ENCODE measurements at regions of chr6 and their contacts with region 1.

Region 1: DNA sequence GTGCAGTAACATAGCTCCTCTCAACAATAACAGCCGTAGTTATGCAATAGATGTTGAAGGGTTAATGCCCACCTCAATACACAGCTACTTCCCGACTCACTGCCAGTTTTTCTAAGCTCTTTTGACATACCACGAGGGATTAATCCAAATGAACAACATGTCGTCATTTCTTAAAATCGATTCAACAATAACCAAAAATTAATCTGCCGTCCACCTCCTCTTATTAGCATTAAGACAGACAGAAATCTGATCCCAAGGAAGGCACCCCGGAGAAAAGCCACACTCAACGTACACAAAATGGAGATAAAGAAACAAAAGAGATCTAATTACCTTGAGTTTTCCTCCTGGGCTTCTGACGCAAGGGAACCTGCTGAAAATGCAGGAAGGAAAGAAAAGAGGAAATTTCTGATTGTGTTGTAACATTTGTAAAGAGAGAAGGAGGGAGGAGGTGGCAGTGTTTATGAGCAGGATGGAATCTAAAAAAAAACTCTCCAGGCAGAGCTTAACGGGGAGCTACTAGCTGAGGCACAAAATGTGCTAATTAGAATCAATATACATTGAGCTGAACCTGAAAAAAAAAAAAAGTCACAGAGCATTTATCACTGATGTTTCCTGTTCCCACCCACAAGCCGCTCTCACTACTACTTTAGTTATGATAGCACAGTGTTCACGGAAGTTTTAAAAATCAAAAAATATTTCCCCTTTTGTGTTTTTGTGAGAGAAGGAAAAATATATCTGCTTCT is 109.3 kb downstream of the IPCEF1 start:
- DNase-seq: no peak
- H3K4me3 Mint-ChIP-seq: peak overlapping the region; percentile 84
- H3K27ac Mint-ChIP-seq: peak overlapping the region; percentile 52
- H3K4me1 Mint-ChIP-seq: peaks cover 79% of the 10 kb centered on the region
- H3K27me3 Mint-ChIP-seq: peaks cover 27% of the 10 kb centered on the region

Region 2: GRCh38 chr6:152982768-152983636 is 1264.3 kb before region 1 on chr6 and contains the start of gene FBXO5:
- intact Hi-C with region 1: loop called (anchors 5 kb)
- DNase-seq: peak; percentile 97
- H3K4me3 Mint-ChIP-seq: peak within 1 kb of the TSS; percentile 97
- H3K27ac Mint-ChIP-seq: peak within 1 kb of the TSS; percentile 100
- H3K4me1 Mint-ChIP-seq: peaks cover 44% of the 10 kb centered on the region
- H3K27me3 Mint-ChIP-seq: no peaks in the 10 kb centered on the region
- total RNA-seq, gene FBXO5: 31.4 and 34.6 TPM in 2 replicates

Region 3: GRCh38 chr6:154187714-154188113 is 59.6 kb before region 1 on chr6:
- intact Hi-C with region 1: no loop called
- DNase-seq: no peak
- H3K4me3 Mint-ChIP-seq: no peak overlapping the region
- H3K27ac Mint-ChIP-seq: no peak overlapping the region
- H3K4me1 Mint-ChIP-seq: no peaks in the 10 kb centered on the region
- H3K27me3 Mint-ChIP-seq: no peaks in the 10 kb centered on the region

Region 4: GRCh38 chr6:154267508-154268106 is 20.3 kb after region 1 on chr6:
- intact Hi-C with region 1: loop called (anchors 1 kb)
- DNase-seq: no peak
- H3K4me3 Mint-ChIP-seq: no peak overlapping the region
- H3K27ac Mint-ChIP-seq: no peak overlapping the region
- H3K4me1 Mint-ChIP-seq: peaks cover 9% of the 10 kb centered on the region
- H3K27me3 Mint-ChIP-seq: peaks cover 18% of the 10 kb centered on the region

Region 5: GRCh38 chr6:154352898-154353585 is 105.8 kb after region 1 on chr6:
- intact Hi-C with region 1: loop called (anchors 5 kb)
- DNase-seq: no peak
- H3K4me3 Mint-ChIP-seq: no peak overlapping the region
- H3K27ac Mint-ChIP-seq: no peak overlapping the region
- H3K4me1 Mint-ChIP-seq: peaks cover 24% of the 10 kb centered on the region
- H3K27me3 Mint-ChIP-seq: peaks cover 50% of the 10 kb centered on the region

Region 6: GRCh38 chr6:154606457-154606856 is 359.2 kb after region 1 on chr6:
- intact Hi-C with region 1: loop called (anchors 5 kb)
- DNase-seq: peak; percentile 26
- H3K4me3 Mint-ChIP-seq: peak overlapping the region; percentile 5
- H3K27ac Mint-ChIP-seq: peak overlapping the region; percentile 71
- H3K4me1 Mint-ChIP-seq: peaks cover 38% of the 10 kb centered on the region
- H3K27me3 Mint-ChIP-seq: peaks cover 10% of the 10 kb centered on the region